ENCODE measurements at regions of chr1 and their contacts with region 1.

Region 1: GRCh38 chr1:226121587-226122400 is 59.3 kb downstream of the H3-3A start:
- DNase-seq: peak; percentile 37
- H3K4me3 ChIP-seq: peak overlapping the region; percentile 58 to 74 (median 66)
- H3K27ac ChIP-seq: peak overlapping the region; percentile 49
- H3K4me1 ChIP-seq: peaks cover 32% of the 10 kb centered on the region
- H3K27me3 ChIP-seq: no peaks in the 10 kb centered on the region
- CTCF ChIP-seq: peak; percentile 45 to 61

Region 2: GRCh38 chr1:225437710-225438437 is 683.9 kb before region 1 on chr1:
- CTCF ChIA-PET with region 1: no interaction called
- dilution Hi-C with region 1: no loop called
- in situ Hi-C with region 1: no loop called
- intact Hi-C with region 1: no loop called
- DNase-seq: no peak
- H3K4me3 ChIP-seq: no peak overlapping the region
- H3K27ac ChIP-seq: no peak overlapping the region
- H3K4me1 ChIP-seq: no peaks in the 10 kb centered on the region
- H3K27me3 ChIP-seq: no peaks in the 10 kb centered on the region
- CTCF ChIP-seq: peak; percentile 26 to 54

Region 3: DNA sequence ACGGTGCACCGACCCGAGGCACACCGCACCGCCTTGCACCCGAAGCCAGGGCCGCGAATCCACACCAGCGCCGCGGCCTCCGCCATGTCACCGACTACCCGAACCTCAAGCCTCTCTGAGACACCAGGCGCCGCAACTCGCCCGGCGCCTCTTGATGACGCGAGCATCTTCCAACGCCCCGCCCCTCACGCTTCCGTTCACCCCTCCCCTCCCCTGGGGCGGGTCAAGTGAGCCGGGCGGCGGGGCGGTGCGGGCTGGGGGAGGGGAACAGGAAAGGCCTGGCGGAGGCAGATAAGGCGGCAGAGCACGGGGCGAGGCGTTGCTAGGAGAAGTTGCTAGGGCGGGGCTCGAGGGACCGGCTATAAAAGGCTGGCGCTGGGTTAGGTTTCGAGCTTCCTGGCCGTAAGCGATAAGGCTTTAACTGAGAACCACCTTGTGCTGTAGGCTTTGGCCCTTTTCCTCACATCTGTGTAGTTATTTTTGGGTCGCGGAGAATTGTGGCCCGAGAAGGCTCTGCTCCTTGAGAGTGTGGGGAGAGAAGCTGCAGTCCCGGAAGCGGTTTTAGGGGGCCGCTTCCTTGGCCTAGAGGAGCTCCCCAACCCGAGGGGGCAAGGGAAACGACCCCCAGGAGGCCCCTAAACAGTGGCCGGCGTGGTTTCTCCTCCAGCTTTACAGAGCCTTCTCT is 122.4 kb before region 1 on chr1 and contains the start of gene SDE2:
- CTCF ChIA-PET with region 1: no interaction called
- dilution Hi-C with region 1: no loop called
- in situ Hi-C with region 1: no loop called
- intact Hi-C with region 1: loop called (anchors 5 kb)
- DNase-seq: peak; percentile 98
- H3K4me3 ChIP-seq: peak within 1 kb of the TSS; percentile 89 to 94 (median 93)
- H3K27ac ChIP-seq: peak within 1 kb of the TSS; percentile 94
- H3K4me1 ChIP-seq: peaks cover 29% of the 10 kb centered on the region
- H3K27me3 ChIP-seq: no peaks in the 10 kb centered on the region
- CTCF ChIP-seq: no peak
- total RNA-seq, gene SDE2: 22.0 to 23.5 TPM

Region 4: GRCh38 chr1:226083302-226084101 is 38.3 kb before region 1 on chr1:
- CTCF ChIA-PET with region 1: no interaction called
- dilution Hi-C with region 1: no loop called
- in situ Hi-C with region 1: no loop called
- intact Hi-C with region 1: loop called (anchors 5 kb)
- DNase-seq: peak; percentile 75
- H3K4me3 ChIP-seq: peak overlapping the region; percentile 47 to 75 (median 58)
- H3K27ac ChIP-seq: no peak overlapping the region
- H3K4me1 ChIP-seq: peaks cover 7% of the 10 kb centered on the region
- H3K27me3 ChIP-seq: no peaks in the 10 kb centered on the region
- CTCF ChIP-seq: peak in 1 of 2 donors; percentile 2

Region 5: DNA sequence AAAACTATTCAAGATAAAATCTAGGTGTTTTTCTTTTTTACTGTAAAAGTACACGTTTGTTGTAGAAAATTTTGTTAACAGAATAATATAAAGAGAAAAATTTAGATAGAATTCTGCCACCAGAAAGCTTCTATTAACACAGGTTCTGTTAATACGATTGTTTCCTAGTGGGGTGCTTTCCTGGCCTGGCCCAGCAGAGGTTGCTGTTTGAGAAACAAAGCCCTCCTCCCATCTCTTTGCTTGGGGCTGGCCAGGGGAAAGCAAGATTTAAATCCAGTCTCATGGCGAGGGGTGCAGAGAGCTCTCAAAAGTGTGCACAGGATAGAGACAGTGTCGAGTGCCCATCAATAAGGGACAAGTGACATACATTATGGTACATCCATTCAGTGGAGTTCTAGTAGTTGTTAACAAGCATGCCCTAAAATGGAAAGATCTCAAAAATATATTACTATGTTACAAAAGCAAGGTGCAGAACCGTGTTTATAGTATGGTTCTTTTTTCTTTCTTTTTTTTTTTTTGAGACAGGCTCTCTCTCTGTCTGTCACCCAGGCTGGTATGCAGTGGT is 79.3 kb after region 1 on chr1:
- CTCF ChIA-PET with region 1: interaction called, 5 read pairs
- dilution Hi-C with region 1: no loop called
- in situ Hi-C with region 1: no loop called
- intact Hi-C with region 1: loop called (anchors 1 kb)
- DNase-seq: no peak
- H3K4me3 ChIP-seq: no peak overlapping the region
- H3K27ac ChIP-seq: no peak overlapping the region
- H3K4me1 ChIP-seq: no peaks in the 10 kb centered on the region
- H3K27me3 ChIP-seq: no peaks in the 10 kb centered on the region
- CTCF ChIP-seq: peak; percentile 25 to 50

Region 6: GRCh38 chr1:226407497-226408284 is 285.9 kb after region 1 on chr1 and contains the start of gene PARP1:
- CTCF ChIA-PET with region 1: interaction called, 4 read pairs
- dilution Hi-C with region 1: no loop called
- in situ Hi-C with region 1: no loop called
- intact Hi-C with region 1: loop called (anchors 5 kb)
- DNase-seq: peak; percentile 79
- H3K4me3 ChIP-seq: peak within 1 kb of the TSS; percentile 75 to 83 (median 77)
- H3K27ac ChIP-seq: peak within 1 kb of the TSS; percentile 40
- H3K4me1 ChIP-seq: peaks cover 18% of the 10 kb centered on the region
- H3K27me3 ChIP-seq: no peaks in the 10 kb centered on the region
- CTCF ChIP-seq: peak; percentile 22 to 42
- total RNA-seq, gene PARP1: 67.7 to 80.8 TPM

Measured in mammary epithelial cell (primary cell).